ENCODE measurements at regions of chr6 and their contacts with region 1.

Region 1: DNA sequence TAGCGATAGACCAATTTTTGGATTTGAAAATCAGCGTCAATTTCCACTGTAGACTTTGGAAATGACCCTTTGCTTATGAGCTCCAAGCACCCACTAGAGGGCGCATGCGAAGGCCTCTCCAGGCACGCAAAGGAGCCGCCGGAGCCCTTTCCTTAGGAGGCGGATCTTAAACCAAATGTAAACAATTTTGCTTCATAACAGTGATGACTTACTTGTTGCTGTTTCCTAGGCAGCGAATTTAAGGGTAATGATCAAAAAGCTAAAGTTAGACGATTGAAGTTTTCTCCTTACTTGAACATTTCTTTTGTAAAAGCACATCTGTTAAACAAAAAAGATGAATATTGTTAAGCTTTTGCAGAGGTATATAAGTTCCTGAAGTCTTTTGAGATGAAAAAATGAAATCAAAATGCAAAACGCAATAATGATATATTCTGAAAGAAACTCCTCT is 29.2 kb upstream of the EXOC2 start:
- DNase-seq: peak; percentile 84
- H3K4me3 ChIP-seq: no peak overlapping the region
- H3K27ac ChIP-seq: no peak overlapping the region
- H3K4me1 ChIP-seq: no peaks in the 10 kb centered on the region
- H3K27me3 ChIP-seq: peaks cover 22% of the 10 kb centered on the region
- CTCF ChIP-seq: peak; percentile 96

Region 2: DNA sequence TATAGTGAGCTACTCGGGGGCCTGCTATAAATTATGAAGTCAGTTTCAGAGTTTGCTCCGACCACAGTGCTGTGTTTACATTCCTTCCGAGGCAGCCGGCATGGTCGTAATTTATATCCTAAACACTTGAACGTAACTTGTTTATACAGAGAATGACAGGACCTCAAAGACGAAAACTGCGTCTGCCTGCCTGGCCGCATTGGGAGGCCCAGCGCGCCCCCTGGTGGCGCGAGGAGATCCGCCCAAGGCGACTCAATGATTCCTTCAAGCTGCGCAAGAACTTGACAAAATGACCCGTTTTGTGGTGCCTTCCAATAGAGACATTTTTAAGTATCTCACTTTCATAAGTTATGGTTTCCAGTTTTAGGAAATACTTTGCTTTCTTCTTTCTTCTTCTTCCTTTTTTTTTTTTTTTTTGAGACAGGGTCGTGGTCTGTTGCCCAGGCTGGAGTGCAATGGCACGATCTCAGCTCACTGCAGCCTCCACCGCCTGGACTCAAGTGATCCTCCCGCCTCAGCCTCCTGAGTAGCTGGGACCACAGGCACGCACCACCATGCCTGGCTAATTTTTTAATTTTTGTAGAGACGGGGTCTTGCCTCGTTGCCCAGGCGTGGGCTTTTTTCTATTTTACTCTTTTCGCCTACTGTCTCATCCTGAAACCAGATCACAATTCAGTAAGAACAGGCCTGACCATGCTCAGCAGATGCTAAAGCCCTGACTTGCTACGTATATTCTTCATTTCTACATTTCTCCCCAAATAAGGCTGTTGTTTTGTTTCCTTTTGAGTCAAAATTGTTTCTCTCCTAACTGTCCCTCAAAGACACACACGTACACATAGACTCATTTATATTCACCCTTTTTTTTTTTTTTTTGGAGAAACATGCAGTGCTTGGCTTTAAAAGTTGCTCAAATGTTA is 675.1 kb after region 1 on chr6:
- CTCF ChIA-PET with region 1: no interaction called
- POLR2A ChIA-PET with region 1: no interaction called
- intact Hi-C with region 1: loop called (anchors 5 kb)
- DNase-seq: peak; percentile 78
- H3K4me3 ChIP-seq: no peak overlapping the region
- H3K27ac ChIP-seq: no peak overlapping the region
- H3K4me1 ChIP-seq: no peaks in the 10 kb centered on the region
- H3K27me3 ChIP-seq: peaks cover 41% of the 10 kb centered on the region
- CTCF ChIP-seq: peak; percentile 97

Region 3: DNA sequence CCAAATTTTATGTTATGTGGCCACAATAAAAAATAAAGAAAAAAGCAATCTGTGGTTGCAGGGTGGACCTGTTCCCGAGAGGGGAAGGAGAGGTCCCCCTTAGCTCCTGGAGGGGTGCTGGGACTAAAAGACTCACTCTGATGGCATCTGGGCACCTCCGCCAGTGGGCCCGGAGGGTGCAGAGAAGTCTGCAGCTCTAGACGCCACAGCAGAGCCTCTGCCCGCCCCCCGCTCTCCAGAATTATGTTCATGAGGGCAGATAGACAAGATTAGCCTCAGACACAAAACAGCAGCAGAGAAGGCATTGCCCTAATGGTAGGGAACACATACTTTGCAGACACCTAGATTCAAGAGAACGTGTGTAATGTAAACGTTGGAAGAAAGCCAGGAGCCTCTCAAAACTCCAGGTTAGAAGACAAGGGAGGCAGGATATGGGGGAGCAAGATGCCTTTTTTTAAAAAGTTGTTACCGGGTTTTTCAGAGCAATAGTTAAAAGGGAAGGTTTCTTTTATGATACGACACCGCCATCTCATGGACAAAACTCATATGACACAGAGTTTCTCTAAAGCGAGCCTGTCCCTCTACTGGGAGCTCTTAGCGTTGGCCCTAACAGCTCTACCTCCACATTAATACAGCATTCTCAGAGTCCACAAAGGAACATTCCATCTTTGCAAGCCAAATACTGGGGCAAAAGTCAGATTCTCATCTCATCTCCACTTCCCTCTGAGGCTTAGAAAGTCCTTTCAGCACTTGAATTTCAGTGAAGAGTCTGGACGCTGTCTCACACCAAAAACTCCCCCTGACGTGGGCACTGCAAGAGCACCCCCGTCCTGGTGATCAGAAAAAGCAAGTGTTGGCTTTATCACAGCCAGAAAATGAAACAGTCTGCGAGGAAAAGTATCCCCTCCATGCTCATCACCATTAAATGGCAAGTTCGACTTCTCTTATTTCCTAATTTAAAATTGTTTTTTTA is 714.5 kb after region 1 on chr6:
- CTCF ChIA-PET with region 1: interaction called, 4 read pairs
- POLR2A ChIA-PET with region 1: no interaction called
- intact Hi-C with region 1: loop called (anchors 5 kb)
- DNase-seq: peak; percentile 80
- H3K4me3 ChIP-seq: no peak overlapping the region
- H3K27ac ChIP-seq: no peak overlapping the region
- H3K4me1 ChIP-seq: no peaks in the 10 kb centered on the region
- H3K27me3 ChIP-seq: peaks cover 32% of the 10 kb centered on the region
- CTCF ChIP-seq: peak; percentile 75